Common myeloid progenitor, CD34-positive (primary cell): ENCODE measurements at regions of chr10 and their contacts with region 1.

Region 1: GRCh38 chr10:123573236-123574108 is 92.7 kb upstream of the GPR26 start:
- DNase-seq: peak; percentile 11 to 32 (median 24)
- H3K4me3 ChIP-seq: no peak overlapping the region
- H3K27ac ChIP-seq: no peak overlapping the region
- H3K4me1 ChIP-seq: no peaks in the 10 kb centered on the region
- H3K27me3 ChIP-seq: peaks cover 0 to 35% (median 2%) of the 10 kb centered on the region in 5 experiments

Region 2: GRCh38 chr10:123512901-123513775 is 60.3 kb before region 1 on chr10:
- CTCF ChIA-PET with region 1: no interaction called
- POLR2A ChIA-PET with region 1: no interaction called
- DNase-seq: no peak
- H3K4me3 ChIP-seq: no peak overlapping the region
- H3K27ac ChIP-seq: no peak overlapping the region
- H3K4me1 ChIP-seq: no peaks in the 10 kb centered on the region
- H3K27me3 ChIP-seq: peaks cover 0 to 33% (median 0%) of the 10 kb centered on the region in 5 experiments

Region 3: DNA sequence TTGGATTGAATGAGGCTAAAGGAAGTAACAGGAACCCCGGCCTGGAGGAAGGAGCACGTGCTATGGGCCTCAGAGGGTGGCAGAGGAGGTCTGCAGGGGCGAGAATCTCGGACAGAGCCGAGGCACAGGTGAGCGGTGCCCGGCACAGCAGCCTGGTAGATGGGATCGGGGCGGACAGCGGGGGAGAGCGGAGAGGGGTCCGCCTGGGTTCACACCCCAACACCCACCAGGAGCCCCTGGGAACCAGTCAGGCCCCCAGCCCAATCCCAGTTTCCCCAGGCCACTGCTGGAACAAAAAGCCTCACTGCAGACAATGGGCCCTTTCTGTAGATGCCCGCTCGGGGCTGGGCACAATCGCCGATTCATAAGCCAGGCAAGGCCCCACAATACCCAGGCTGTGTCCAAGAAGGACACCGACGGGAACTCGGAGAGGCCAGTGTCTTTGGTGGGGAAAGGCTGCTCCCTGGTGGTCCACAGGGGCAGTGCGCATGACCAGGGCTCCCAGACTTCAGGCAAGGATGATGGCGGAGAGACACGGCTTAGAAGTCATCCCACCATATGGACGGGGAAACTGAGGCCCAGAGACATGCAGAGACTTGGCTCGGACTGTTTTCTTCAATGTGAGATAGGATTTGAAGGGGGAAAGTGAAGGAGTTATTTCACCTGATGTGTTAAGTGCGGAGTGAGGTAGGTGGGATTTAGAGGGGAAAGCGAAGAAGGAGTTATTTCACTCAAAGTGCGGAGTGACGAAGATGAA is 14.2 kb before region 1 on chr10:
- CTCF ChIA-PET with region 1: interaction called, 10 read pairs
- POLR2A ChIA-PET with region 1: no interaction called
- DNase-seq: peak; percentile 32 to 55 (median 43)
- H3K4me3 ChIP-seq: no peak overlapping the region
- H3K27ac ChIP-seq: no peak overlapping the region
- H3K4me1 ChIP-seq: no peaks in the 10 kb centered on the region
- H3K27me3 ChIP-seq: peaks cover 2 to 8% (median 5%) of the 10 kb centered on the region in 5 experiments

Region 4: GRCh38 chr10:123848564-123849457 is 275.3 kb after region 1 on chr10:
- CTCF ChIA-PET with region 1: no interaction called
- POLR2A ChIA-PET with region 1: no interaction called
- DNase-seq: no peak
- H3K4me3 ChIP-seq: no peak overlapping the region
- H3K27ac ChIP-seq: no peak overlapping the region
- H3K4me1 ChIP-seq: no peaks in the 10 kb centered on the region
- H3K27me3 ChIP-seq: peaks cover 0 to 17% (median 0%) of the 10 kb centered on the region in 5 experiments

Region 5: DNA sequence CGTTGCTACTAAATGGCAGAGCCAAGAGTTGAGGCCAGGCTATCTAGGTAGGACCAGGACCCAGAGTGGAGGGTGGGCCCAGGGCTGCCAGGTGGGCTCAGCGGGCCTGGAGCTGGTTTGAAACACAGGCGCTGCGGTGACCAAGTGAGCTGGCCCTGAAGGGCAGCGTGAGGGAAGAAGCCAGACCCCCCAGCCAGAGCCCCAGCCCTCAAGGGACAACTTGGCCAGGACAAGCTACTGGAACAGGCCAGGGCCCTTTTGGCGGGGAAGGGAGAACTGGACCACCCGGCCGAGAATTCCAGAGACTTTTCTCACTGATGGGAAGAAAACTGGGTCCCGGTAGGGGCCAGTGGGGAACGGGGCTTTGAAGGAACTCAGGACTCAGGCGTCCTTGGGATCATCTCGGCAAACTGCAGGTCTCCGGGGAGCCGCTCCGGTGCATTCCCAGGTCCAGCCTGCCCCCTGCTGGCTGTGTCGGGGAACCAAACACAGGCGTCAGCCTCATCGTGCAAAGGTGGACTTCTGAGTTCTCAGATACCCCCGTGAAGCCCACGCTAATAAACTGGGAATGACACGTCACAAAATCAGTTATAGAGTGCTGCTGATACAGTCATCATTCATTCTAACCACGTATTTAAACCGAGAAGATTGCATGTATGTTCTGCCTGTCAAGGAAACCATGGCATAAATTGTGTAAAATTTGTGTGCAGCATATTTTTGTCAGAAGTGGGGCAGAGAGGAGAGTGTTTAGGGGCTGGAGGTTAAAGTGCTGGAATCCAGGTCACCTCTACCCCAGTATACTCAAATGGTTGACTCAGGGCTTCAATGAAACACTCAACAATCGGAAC is 394.1 kb after region 1 on chr10:
- CTCF ChIA-PET with region 1: interaction called, 128 read pairs
- POLR2A ChIA-PET with region 1: no interaction called
- DNase-seq: peak; percentile 45 to 66 (median 60)
- H3K4me3 ChIP-seq: no peak overlapping the region
- H3K27ac ChIP-seq: no peak overlapping the region
- H3K4me1 ChIP-seq: peaks cover 0 to 14% (median 7%) of the 10 kb centered on the region in 4 experiments
- H3K27me3 ChIP-seq: peaks cover 2 to 68% (median 29%) of the 10 kb centered on the region in 5 experiments